ENCODE measurements at regions of chr11 and their contacts with region 1.

Region 1: GRCh38 chr11:17384002-17384511 is 4.4 kb downstream of the KCNJ11 start:
- DNase-seq: peak; percentile 80
- ATAC-seq: peak; percentile 60
- H3K4me3 Mint-ChIP-seq: no peak overlapping the region
- H3K27ac Mint-ChIP-seq: no peak overlapping the region
- H3K4me1 Mint-ChIP-seq: peaks cover 5% of the 10 kb centered on the region
- H3K27me3 Mint-ChIP-seq: peaks cover 8% of the 10 kb centered on the region

Region 2: GRCh38 chr11:16862746-16863145 is 521.3 kb before region 1 on chr11:
- CTCF ChIA-PET with region 1: no interaction called
- DNase-seq: no peak
- ATAC-seq: no peak
- H3K4me3 Mint-ChIP-seq: no peak overlapping the region
- H3K27ac Mint-ChIP-seq: no peak overlapping the region
- H3K4me1 Mint-ChIP-seq: peaks cover 3% of the 10 kb centered on the region
- H3K27me3 Mint-ChIP-seq: no peaks in the 10 kb centered on the region

Region 3: DNA sequence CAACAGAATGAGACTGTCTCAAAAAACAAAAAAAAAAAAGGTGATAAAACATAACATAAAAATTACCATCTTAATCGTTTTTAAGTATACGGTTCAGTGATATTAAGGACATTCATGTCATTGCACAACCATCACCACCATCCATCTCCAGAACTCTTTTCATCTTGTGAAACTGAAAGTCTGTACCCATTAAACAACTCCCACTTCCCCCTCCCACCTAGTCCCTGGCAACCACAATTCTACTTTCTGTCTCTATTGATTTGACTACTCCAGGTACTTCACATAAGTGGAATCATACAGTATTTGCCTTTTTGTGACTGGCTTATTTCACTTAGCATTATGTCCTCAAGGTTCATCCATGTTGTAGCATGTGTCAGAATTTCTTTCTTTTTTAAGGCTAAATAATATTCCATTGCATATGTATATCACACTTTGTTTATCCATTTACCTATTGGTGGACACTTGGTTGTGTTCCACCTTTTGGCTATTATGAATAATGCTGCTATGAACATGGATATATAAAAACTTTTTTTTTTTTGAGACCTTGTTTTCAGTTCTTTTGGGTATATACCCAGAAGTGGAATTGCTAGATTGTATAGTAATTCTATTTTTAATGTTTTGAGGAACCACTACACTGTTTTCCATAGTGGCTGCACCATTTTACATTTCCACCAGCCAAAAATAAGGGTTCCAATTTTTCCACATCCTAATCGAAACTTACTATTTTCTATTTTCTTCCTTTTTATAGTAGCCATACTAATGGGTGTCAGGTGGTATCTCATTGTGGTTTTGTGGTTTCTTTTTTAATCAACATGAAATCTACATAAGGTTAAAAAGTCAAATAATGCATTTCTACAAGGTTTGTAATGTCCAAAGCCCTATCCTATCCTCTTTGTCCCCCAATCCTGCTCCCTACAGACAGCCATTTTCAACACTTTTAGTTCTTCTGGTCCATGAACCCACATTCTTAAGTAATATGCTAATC is 152.9 kb before region 1 on chr11:
- CTCF ChIA-PET with region 1: interaction called, 10 read pairs
- DNase-seq: peak; percentile 63
- ATAC-seq: peak; percentile 82
- H3K4me3 Mint-ChIP-seq: no peak overlapping the region
- H3K27ac Mint-ChIP-seq: peak overlapping the region; percentile 28
- H3K4me1 Mint-ChIP-seq: peaks cover 14% of the 10 kb centered on the region
- H3K27me3 Mint-ChIP-seq: peaks cover 11% of the 10 kb centered on the region

Region 4: GRCh38 chr11:17298302-17298701 is 85.8 kb before region 1 on chr11:
- CTCF ChIA-PET with region 1: no interaction called
- DNase-seq: peak; percentile 79
- ATAC-seq: peak; percentile 74
- H3K4me3 Mint-ChIP-seq: no peak overlapping the region
- H3K27ac Mint-ChIP-seq: peak overlapping the region; percentile 19
- H3K4me1 Mint-ChIP-seq: peaks cover 39% of the 10 kb centered on the region
- H3K27me3 Mint-ChIP-seq: no peaks in the 10 kb centered on the region

Region 5: GRCh38 chr11:17354601-17354991 is 29.5 kb before region 1 on chr11:
- CTCF ChIA-PET with region 1: interaction called, 11 read pairs
- DNase-seq: peak; percentile 78
- ATAC-seq: no peak
- H3K4me3 Mint-ChIP-seq: no peak overlapping the region
- H3K27ac Mint-ChIP-seq: no peak overlapping the region
- H3K4me1 Mint-ChIP-seq: peaks cover 28% of the 10 kb centered on the region
- H3K27me3 Mint-ChIP-seq: peaks cover 30% of the 10 kb centered on the region

Region 6: GRCh38 chr11:17421781-17422180 is 37.7 kb after region 1 on chr11:
- CTCF ChIA-PET with region 1: interaction called, 12 read pairs
- DNase-seq: no peak
- ATAC-seq: no peak
- H3K4me3 Mint-ChIP-seq: no peak overlapping the region
- H3K27ac Mint-ChIP-seq: no peak overlapping the region
- H3K4me1 Mint-ChIP-seq: peaks cover 6% of the 10 kb centered on the region
- H3K27me3 Mint-ChIP-seq: peaks cover 52% of the 10 kb centered on the region

Region 7: GRCh38 chr11:17504330-17505107 is 120.5 kb after region 1 on chr11:
- CTCF ChIA-PET with region 1: interaction called, 74 read pairs
- DNase-seq: peak; percentile 79
- ATAC-seq: peak; percentile 83
- H3K4me3 Mint-ChIP-seq: no peak overlapping the region
- H3K27ac Mint-ChIP-seq: no peak overlapping the region
- H3K4me1 Mint-ChIP-seq: no peaks in the 10 kb centered on the region
- H3K27me3 Mint-ChIP-seq: peaks cover 7% of the 10 kb centered on the region

Region 8: DNA sequence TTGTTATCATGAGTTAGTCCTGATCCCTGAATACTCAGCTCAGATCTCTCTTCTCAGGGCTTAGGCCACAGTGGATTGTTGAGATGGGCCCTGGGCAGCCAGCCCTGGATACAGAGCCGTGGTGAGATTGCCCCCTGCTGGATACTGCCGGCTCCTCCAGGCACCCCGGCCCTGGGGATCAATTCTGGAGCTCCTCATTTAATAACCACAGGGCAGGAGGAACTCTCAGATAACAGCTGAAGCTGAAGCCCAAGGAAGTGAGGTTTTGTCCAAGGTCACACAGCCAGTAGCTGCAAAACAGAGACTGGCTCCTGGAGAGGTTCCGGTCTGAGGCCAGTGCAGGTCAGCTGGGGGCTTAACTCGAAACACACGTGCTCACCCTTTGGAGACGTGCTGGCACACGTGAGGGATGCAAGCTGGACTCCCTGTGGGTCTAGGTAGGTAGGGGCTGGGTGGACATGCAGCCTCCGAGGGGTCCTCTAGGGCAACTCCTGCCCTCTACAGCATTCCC is 144.2 kb after region 1 on chr11:
- CTCF ChIA-PET with region 1: interaction called, 38 read pairs
- DNase-seq: peak; percentile 53
- ATAC-seq: peak; percentile 87
- H3K4me3 Mint-ChIP-seq: no peak overlapping the region
- H3K27ac Mint-ChIP-seq: no peak overlapping the region
- H3K4me1 Mint-ChIP-seq: no peaks in the 10 kb centered on the region
- H3K27me3 Mint-ChIP-seq: peaks cover 13% of the 10 kb centered on the region